ENCODE measurements at regions of chr3 and their contacts with region 1.

Region 1: DNA sequence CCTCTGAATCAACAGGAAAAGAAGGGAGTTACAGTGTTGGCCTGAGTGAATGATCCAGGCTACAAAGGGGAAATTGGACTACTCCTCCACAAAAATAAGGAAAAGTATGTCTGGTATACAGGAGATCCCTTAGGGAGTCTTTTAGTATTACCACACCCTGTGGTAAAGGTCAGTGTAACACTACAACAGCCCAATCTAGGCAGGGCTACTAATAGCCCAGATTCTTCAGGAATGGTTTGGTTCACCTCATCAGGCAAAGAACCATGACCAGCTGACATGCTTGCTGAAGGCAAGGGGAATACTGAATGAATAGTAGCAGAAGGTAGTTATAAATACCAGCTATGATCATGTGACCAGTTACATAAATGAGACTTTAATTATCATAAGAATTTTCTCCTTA is 372.6 kb upstream of the ATP11B start:
- DNase-seq: no peak
- H3K4me3 ChIP-seq: no peak overlapping the region
- H3K27ac ChIP-seq: no peak overlapping the region
- H3K4me1 ChIP-seq: no peaks in the 10 kb centered on the region
- H3K27me3 ChIP-seq: no peaks in the 10 kb centered on the region
- CTCF ChIP-seq: no peak
- EP300 ChIP-seq: no peak
- POLR2A ChIP-seq: no peak

Region 2: GRCh38 chr3:181288145-181288544 is 1132.6 kb before region 1 on chr3:
- in situ Hi-C with region 1: no loop called
- intact Hi-C with region 1: loop called (anchors 5 kb)
- DNase-seq: no peak
- H3K4me3 ChIP-seq: no peak overlapping the region
- H3K27ac ChIP-seq: no peak overlapping the region
- H3K4me1 ChIP-seq: no peaks in the 10 kb centered on the region
- H3K27me3 ChIP-seq: no peaks in the 10 kb centered on the region
- CTCF ChIP-seq: no peak
- EP300 ChIP-seq: no peak
- POLR2A ChIP-seq: no peak

Region 3: DNA sequence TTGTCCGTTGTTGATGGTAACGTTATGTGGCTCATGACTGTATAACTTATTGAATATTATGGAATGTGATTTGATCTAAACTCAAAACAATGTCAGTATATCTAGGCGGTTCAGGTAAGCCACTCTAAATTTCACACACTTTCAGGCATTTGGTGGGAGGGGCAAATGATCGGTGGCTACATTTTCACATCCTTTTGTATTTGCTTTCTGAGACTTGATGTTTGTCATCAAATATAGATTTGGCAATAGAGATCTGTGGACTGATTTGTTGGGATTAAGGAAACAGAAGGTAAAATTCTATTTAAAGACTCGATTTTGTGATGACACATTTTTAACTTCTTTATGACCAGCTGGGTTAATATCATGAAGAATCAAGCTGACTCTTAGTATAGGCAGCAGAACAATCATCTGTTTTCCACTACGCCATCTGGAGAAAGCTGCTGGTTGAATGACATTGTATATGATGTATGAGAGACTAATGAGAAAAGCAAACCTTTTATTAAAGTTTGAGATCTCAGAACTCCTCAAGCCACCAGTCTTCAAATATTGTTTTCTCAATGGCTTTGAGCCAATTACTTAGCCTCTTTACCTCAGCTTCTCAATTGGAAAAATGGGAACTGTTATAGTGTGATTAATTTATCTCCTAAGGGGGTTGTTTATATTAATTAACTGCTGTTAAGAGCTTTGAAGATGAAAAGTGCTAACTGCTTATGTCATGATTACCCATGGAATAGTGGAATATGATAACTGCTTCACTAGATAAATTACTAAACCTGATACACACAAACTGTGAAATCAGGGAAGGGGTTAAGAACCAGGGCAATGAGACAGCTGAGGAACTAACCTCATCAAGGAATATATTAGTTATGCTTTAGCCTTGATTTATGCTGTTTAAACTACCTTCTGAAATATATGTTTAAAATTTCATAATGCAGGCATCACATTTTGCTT is 379.1 kb before region 1 on chr3:
- in situ Hi-C with region 1: no loop called
- intact Hi-C with region 1: no loop called
- DNase-seq: no peak
- H3K4me3 ChIP-seq: no peak overlapping the region
- H3K27ac ChIP-seq: no peak overlapping the region
- H3K4me1 ChIP-seq: no peaks in the 10 kb centered on the region
- H3K27me3 ChIP-seq: no peaks in the 10 kb centered on the region
- CTCF ChIP-seq: no peak
- EP300 ChIP-seq: no peak
- POLR2A ChIP-seq: no peak

Region 4: GRCh38 chr3:182142928-182143327 is 277.8 kb before region 1 on chr3:
- in situ Hi-C with region 1: no loop called
- intact Hi-C with region 1: no loop called
- DNase-seq: no peak
- H3K4me3 ChIP-seq: no peak overlapping the region
- H3K27ac ChIP-seq: no peak overlapping the region
- H3K4me1 ChIP-seq: no peaks in the 10 kb centered on the region
- H3K27me3 ChIP-seq: no peaks in the 10 kb centered on the region
- CTCF ChIP-seq: no peak
- EP300 ChIP-seq: no peak
- POLR2A ChIP-seq: no peak

Region 5: GRCh38 chr3:182925330-182925943 is 504.7 kb after region 1 on chr3:
- in situ Hi-C with region 1: no loop called
- intact Hi-C with region 1: no loop called
- DNase-seq: peak; percentile 12
- H3K4me3 ChIP-seq: no peak overlapping the region
- H3K27ac ChIP-seq: no peak overlapping the region
- H3K4me1 ChIP-seq: peaks cover 0 to 2% (median 0%) of the 10 kb centered on the region in 4 donors
- H3K27me3 ChIP-seq: no peaks in the 10 kb centered on the region
- CTCF ChIP-seq: no peak
- EP300 ChIP-seq: no peak
- POLR2A ChIP-seq: no peak